Activated CD4-positive, alpha-beta memory T cell treated with anti-CD3 and anti-CD28 coated beads, Interleukin-2, amount 10 ng/mL, durations not matched to agents 7 days and 5 days (primary cell): ENCODE measurements at regions of chr19 and their contacts with region 1.

Region 1: DNA sequence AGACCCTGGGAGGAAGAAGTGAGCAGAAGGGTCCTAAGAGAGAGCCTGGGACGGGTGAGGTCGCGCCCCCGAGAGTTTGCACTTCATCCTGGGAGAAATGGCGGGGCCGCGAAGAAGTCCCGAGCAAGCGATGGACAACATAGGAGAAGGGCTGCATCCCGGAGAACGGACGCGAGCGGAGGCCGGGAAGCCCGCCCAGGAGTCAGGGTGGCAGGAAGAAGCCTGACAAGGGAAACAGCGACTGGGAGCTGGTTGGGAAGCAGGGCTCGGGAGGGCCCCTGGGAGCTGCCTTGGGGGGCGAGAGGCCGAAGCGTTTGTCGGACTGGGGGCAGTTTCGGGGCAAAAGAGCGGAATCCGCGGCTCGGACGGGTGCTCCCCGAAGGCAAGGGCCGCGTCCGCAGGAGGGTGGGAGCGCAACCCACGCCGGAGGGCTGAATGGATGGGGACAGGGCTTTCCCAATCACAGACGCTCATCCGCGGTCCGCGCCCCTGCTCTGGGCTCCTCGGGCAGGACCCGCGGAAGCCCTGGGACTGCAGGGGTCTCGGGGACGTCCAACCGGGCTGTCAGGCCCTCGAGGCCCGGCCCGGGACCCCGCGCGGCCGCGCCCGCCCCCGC is 469 bp downstream of the ABHD17A start:
- DNase-seq: no peak
- H3K4me3 Mint-ChIP-seq: peak overlapping the region; percentile 98
- H3K27ac Mint-ChIP-seq: peak overlapping the region; percentile 97
- H3K4me1 Mint-ChIP-seq: peaks cover 41% of the 10 kb centered on the region
- H3K27me3 Mint-ChIP-seq: no peaks in the 10 kb centered on the region

Region 2: DNA sequence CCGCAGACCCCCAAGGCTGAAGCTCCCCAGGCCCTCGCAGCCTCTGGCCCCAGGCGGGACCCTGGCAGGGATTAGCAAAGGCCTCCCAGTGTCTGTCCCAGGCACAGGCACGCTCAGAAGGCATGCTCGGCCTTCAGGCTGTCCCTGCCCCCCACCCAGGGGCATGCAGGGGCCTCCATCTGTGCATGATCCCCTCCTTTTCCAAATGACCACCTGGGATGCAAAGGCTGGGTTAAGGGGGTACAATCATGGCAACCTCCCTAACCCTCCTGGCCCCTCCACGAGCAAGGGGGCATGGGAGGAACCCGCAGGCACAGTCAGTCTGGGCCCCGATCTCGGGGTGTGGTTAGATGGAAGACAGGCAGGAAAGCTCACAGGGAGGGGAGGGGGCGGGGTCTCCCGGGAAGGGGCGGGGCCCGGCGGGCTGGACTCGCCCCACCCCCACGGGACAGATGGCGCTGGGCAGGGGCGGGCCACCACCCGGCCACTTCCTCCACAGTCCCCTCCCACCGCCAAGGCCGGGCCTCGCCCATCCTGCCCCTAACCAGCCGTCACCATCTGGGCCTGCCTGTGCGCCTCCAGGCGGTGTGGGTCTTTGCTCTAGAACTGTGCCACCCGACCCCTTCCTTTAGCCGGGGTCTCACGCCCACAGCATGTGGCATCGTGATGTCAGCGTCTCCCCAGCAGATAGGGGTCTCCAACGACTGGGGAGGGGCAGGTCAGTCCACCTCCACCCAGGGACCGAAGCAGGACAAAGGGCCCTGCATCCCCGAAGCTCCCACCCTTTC is 29.6 kb before region 1 on chr19:
- CTCF ChIA-PET with region 1: no interaction called
- POLR2A ChIA-PET with region 1: interaction called, 10 read pairs
- DNase-seq: peak; percentile 96
- H3K4me3 Mint-ChIP-seq: peak overlapping the region; percentile 80
- H3K27ac Mint-ChIP-seq: peak overlapping the region; percentile 96
- H3K4me1 Mint-ChIP-seq: peaks cover 59% of the 10 kb centered on the region
- H3K27me3 Mint-ChIP-seq: no peaks in the 10 kb centered on the region

Region 3: GRCh38 chr19:1863726-1864480 is 20.9 kb before region 1 on chr19:
- CTCF ChIA-PET with region 1: interaction called, 9 read pairs
- POLR2A ChIA-PET with region 1: interaction called, 14 read pairs
- DNase-seq: peak; percentile 93
- H3K4me3 Mint-ChIP-seq: peak overlapping the region; percentile 74
- H3K27ac Mint-ChIP-seq: peak overlapping the region; percentile 77
- H3K4me1 Mint-ChIP-seq: peaks cover 44% of the 10 kb centered on the region
- H3K27me3 Mint-ChIP-seq: no peaks in the 10 kb centered on the region

Region 4: GRCh38 chr19:1923319-1923718 is 38.5 kb after region 1 on chr19:
- CTCF ChIA-PET with region 1: interaction called, 3 read pairs
- POLR2A ChIA-PET with region 1: interaction called, 11 read pairs
- DNase-seq: peak; percentile 76
- H3K4me3 Mint-ChIP-seq: no peak overlapping the region
- H3K27ac Mint-ChIP-seq: peak overlapping the region; percentile 90
- H3K4me1 Mint-ChIP-seq: peaks cover 54% of the 10 kb centered on the region
- H3K27me3 Mint-ChIP-seq: no peaks in the 10 kb centered on the region